ENCODE measurements at regions of chr3 and their contacts with region 1.

Region 1: GRCh38 chr3:152235709-152236298 is 32.9 kb upstream of the MBNL1 start:
- DNase-seq: no peak
- ATAC-seq: no peak
- H3K4me3 ChIP-seq: no peak overlapping the region
- H3K4me3 Mint-ChIP-seq: peak overlapping the region in 8 of 10 donors; percentile 7 to 65 (median 56)
- H3K27ac ChIP-seq: peak overlapping the region; percentile 29
- H3K27ac Mint-ChIP-seq: peak overlapping the region in 8 of 9 donors; percentile 74 to 90 (median 85)
- H3K4me1 ChIP-seq: peaks cover 13 to 64% of the 10 kb centered on the region in 2 donors
- H3K4me1 Mint-ChIP-seq: peaks cover 31 to 97% (median 91%) of the 10 kb centered on the region in 7 donors
- H3K27me3 ChIP-seq: no peaks in the 10 kb centered on the region
- H3K27me3 Mint-ChIP-seq: no peaks in the 10 kb centered on the region

Region 2: DNA sequence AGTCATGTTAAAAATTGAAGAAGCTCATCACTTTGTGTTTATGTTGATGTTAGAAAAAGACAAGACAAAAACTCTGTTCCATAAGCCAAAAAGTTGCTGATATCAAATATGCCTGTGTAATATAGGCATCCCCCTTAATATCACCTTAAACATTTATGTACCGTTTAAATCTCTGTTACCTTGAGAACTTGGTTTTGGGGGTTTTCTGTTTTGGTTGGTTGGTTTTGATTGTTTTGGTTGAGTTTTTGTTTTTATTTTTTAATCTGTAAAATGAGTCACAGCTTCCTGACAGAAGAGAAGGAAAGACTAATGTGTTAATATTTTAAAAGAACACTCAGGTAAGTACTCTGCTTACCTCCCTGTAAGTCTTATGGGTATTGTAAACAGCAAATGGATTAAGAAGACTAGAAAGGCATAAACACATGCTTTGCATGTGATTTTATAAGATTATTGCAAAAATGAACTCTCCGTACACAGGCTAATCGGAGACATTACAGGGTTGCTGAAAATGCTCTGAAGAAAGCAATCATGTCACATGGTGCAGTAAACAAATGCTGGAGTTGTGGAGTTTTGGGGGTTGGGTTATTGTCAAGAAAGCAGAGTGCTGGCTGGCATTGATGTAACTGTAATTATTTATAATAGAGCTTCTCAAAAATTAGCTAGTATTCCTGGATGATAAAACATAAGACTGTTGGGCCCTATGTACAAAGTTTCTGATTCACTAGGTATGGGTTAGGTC is 36.5 kb before region 1 on chr3:
- CTCF ChIA-PET with region 1: interaction called, 4 read pairs
- POLR2A ChIA-PET with region 1: interaction called, 33 read pairs
- intact Hi-C with region 1: loop called in 1 of 2 experiments (anchors 1 kb)
- DNase-seq: peak in 2 of 9 donors; percentile 37
- ATAC-seq: peak; percentile 58
- H3K4me3 ChIP-seq: peak overlapping the region; percentile 50
- H3K4me3 Mint-ChIP-seq: peak overlapping the region; percentile 63 to 89 (median 84)
- H3K27ac ChIP-seq: peak overlapping the region; percentile 84
- H3K27ac Mint-ChIP-seq: peak overlapping the region; percentile 90 to 100 (median 94)
- H3K4me1 ChIP-seq: peaks cover 30 to 58% of the 10 kb centered on the region in 2 donors
- H3K4me1 Mint-ChIP-seq: peaks cover 43 to 84% (median 71%) of the 10 kb centered on the region in 7 donors
- H3K27me3 ChIP-seq: no peaks in the 10 kb centered on the region
- H3K27me3 Mint-ChIP-seq: no peaks in the 10 kb centered on the region

Region 3: DNA sequence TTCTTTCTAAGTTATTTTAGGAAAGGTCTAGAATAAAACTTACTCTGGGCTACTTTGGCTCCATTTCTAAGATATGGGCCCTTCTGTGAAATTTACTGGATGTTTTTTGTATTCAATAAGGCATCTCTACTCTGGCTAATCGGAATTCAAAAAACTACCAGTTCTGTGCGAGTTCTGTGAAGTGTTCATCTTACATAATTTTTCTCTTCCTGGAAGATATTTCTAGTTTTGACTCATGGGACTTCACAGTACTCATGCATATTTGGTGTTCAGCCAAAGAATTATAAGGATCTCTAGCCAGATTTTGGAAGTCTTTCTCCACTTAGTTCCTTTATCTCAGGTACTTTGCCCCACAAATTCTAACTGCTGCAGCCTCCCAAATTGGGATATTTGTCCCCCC is 13.5 kb before region 1 on chr3:
- CTCF ChIA-PET with region 1: interaction called, 7 read pairs
- POLR2A ChIA-PET with region 1: interaction called, 16 read pairs
- intact Hi-C with region 1: loop called in 1 of 2 experiments (anchors 1 kb)
- DNase-seq: peak in 1 of 9 donors; percentile 14
- ATAC-seq: peak; percentile 57
- H3K4me3 ChIP-seq: peak overlapping the region; percentile 3
- H3K4me3 Mint-ChIP-seq: peak overlapping the region; percentile 48 to 86 (median 74)
- H3K27ac ChIP-seq: peak overlapping the region; percentile 67
- H3K27ac Mint-ChIP-seq: peak overlapping the region; percentile 65 to 99 (median 92)
- H3K4me1 ChIP-seq: peaks cover 4 to 46% of the 10 kb centered on the region in 2 donors
- H3K4me1 Mint-ChIP-seq: peaks cover 49 to 80% (median 71%) of the 10 kb centered on the region in 7 donors
- H3K27me3 ChIP-seq: no peaks in the 10 kb centered on the region
- H3K27me3 Mint-ChIP-seq: no peaks in the 10 kb centered on the region

Measured in naive thymus-derived CD4-positive, alpha-beta T cell (primary cell).